ENCODE measurements at regions of chr4 and their contacts with region 1.

Region 1: GRCh38 chr4:96352051-96352517 is 512.2 kb downstream of the PDHA2 start:
- DNase-seq: no peak
- ATAC-seq: peak; percentile 68
- H3K4me3 ChIP-seq: no peak overlapping the region
- H3K27ac ChIP-seq: no peak overlapping the region
- H3K4me1 ChIP-seq: no peaks in the 10 kb centered on the region
- H3K27me3 ChIP-seq: no peaks in the 10 kb centered on the region
- CTCF ChIP-seq: peak; percentile 13 to 40 (median 13); a peak in 1 of 6 replicates
- EP300 ChIP-seq: no peak
- POLR2A ChIP-seq: no peak
- RAD21 ChIP-seq: peak; percentile 50; the same call in 1 of the 2 replicates

Region 2: DNA sequence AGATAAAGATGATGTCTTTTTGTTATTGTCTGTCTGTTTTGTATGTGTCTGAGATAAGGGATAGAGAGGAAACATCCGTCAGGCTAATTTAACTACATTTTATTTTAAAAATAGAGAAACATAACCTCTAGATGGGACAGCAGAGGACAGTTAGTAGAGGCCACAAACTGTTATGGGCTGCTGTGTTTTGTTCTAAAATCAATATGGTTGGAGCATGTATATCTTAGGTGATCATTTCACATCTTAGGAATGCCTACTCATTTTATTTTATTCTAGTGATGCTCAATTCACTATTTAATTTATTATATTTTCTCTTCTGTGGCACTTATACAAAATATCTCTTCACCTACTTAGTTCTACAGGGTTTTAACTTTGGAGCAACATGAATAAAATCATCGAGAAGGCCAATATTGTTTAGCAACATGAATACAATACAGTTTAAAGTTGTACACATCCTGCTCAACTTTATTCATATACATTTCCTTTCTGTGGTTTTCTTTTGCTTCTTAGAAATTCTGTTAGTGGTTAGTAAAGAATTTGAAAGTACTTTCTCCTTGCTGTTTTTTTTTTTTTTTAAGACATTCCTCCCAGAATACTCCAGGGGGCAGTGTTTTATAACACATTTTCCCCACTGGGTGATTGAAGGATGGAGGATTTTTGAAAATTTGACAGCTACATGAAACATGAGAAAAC is 1196.2 kb before region 1 on chr4:
- CTCF ChIA-PET with region 1: no interaction called
- POLR2A ChIA-PET with region 1: no interaction called
- RAD21 ChIA-PET with region 1: interaction called, 4 read pairs
- SMC1A ChIA-PET with region 1: no interaction called
- in situ Hi-C with region 1: loop called (anchors 10 kb)
- intact Hi-C with region 1: loop called (anchors 2 kb)
- DNase-seq: no peak
- ATAC-seq: peak; percentile 58
- H3K4me3 ChIP-seq: no peak overlapping the region
- H3K27ac ChIP-seq: no peak overlapping the region
- H3K4me1 ChIP-seq: no peaks in the 10 kb centered on the region
- H3K27me3 ChIP-seq: no peaks in the 10 kb centered on the region; a peak in 2 of 4 replicates
- CTCF ChIP-seq: peak; percentile 51 to 58 (median 52)
- EP300 ChIP-seq: no peak
- POLR2A ChIP-seq: no peak
- RAD21 ChIP-seq: peak; percentile 57

Region 3: GRCh38 chr4:95835672-95836071 is 516.4 kb before region 1 on chr4:
- CTCF ChIA-PET with region 1: interaction called, 3 read pairs
- POLR2A ChIA-PET with region 1: no interaction called
- RAD21 ChIA-PET with region 1: no interaction called
- SMC1A ChIA-PET with region 1: no interaction called
- in situ Hi-C with region 1: no loop called
- intact Hi-C with region 1: loop called (anchors 10 kb)
- DNase-seq: no peak
- ATAC-seq: peak; percentile 43
- H3K4me3 ChIP-seq: no peak overlapping the region
- H3K27ac ChIP-seq: no peak overlapping the region
- H3K4me1 ChIP-seq: no peaks in the 10 kb centered on the region
- H3K27me3 ChIP-seq: no peaks in the 10 kb centered on the region
- CTCF ChIP-seq: peak; percentile 3 to 41 (median 27); a peak in 1 of 6 replicates
- EP300 ChIP-seq: no peak
- POLR2A ChIP-seq: no peak
- RAD21 ChIP-seq: no peak